Naive thymus-derived CD4-positive, alpha-beta T cell (primary cell): ENCODE measurements at regions of chr11 and their contacts with region 1.

Region 1: GRCh38 chr11:128323381-128323780 is 264.0 kb downstream of the ETS1 start:
- DNase-seq: peak in 7 of 9 donors; percentile 51 to 69 (median 60)
- ATAC-seq: no peak
- H3K4me3 ChIP-seq: peak overlapping the region; percentile 1
- H3K4me3 Mint-ChIP-seq: peak overlapping the region; percentile 21 to 89 (median 68)
- H3K27ac ChIP-seq: peak overlapping the region; percentile 91
- H3K27ac Mint-ChIP-seq: peak overlapping the region; percentile 95 to 99 (median 96)
- H3K4me1 ChIP-seq: peaks cover 80% of the 10 kb centered on the region in 2 donors
- H3K4me1 Mint-ChIP-seq: peaks cover 57 to 97% (median 87%) of the 10 kb centered on the region in 7 donors
- H3K27me3 ChIP-seq: no peaks in the 10 kb centered on the region
- H3K27me3 Mint-ChIP-seq: no peaks in the 10 kb centered on the region

Region 2: GRCh38 chr11:127993788-127994187 is 329.6 kb before region 1 on chr11:
- CTCF ChIA-PET with region 1: no interaction called
- POLR2A ChIA-PET with region 1: no interaction called
- intact Hi-C with region 1: no loop called
- DNase-seq: no peak
- ATAC-seq: no peak
- H3K4me3 ChIP-seq: no peak overlapping the region
- H3K4me3 Mint-ChIP-seq: no peak overlapping the region
- H3K27ac ChIP-seq: no peak overlapping the region
- H3K27ac Mint-ChIP-seq: peak overlapping the region in 1 of 9 donors; percentile 55
- H3K4me1 ChIP-seq: no peaks in the 10 kb centered on the region
- H3K4me1 Mint-ChIP-seq: no peaks in the 10 kb centered on the region
- H3K27me3 ChIP-seq: no peaks in the 10 kb centered on the region
- H3K27me3 Mint-ChIP-seq: peaks cover 11 to 41% (median 27%) of the 10 kb centered on the region in 5 donors

Region 3: GRCh38 chr11:128172046-128172878 is 151.1 kb before region 1 on chr11:
- CTCF ChIA-PET with region 1: no interaction called
- POLR2A ChIA-PET with region 1: no interaction called
- intact Hi-C with region 1: no loop called
- DNase-seq: peak; percentile 59 to 82 (median 75)
- ATAC-seq: peak; percentile 85
- H3K4me3 ChIP-seq: no peak overlapping the region
- H3K4me3 Mint-ChIP-seq: no peak overlapping the region
- H3K27ac ChIP-seq: no peak overlapping the region
- H3K27ac Mint-ChIP-seq: peak overlapping the region in 2 of 9 donors; percentile 27 to 70
- H3K4me1 ChIP-seq: no peaks in the 10 kb centered on the region
- H3K4me1 Mint-ChIP-seq: peaks cover 0 to 9% (median 4%) of the 10 kb centered on the region in 7 donors
- H3K27me3 ChIP-seq: no peaks in the 10 kb centered on the region
- H3K27me3 Mint-ChIP-seq: peaks cover 0 to 15% (median 0%) of the 10 kb centered on the region in 5 donors

Region 4: GRCh38 chr11:128311742-128312719 is 11.3 kb before region 1 on chr11:
- CTCF ChIA-PET with region 1: interaction called, 10 read pairs
- POLR2A ChIA-PET with region 1: interaction called, 131 read pairs
- intact Hi-C with region 1: no loop called
- DNase-seq: peak in 3 of 9 donors; percentile 44 to 53 (median 45)
- ATAC-seq: peak; percentile 85
- H3K4me3 ChIP-seq: no peak overlapping the region
- H3K4me3 Mint-ChIP-seq: peak overlapping the region; percentile 9 to 82 (median 58)
- H3K27ac ChIP-seq: peak overlapping the region; percentile 98
- H3K27ac Mint-ChIP-seq: peak overlapping the region; percentile 65 to 99 (median 97)
- H3K4me1 ChIP-seq: peaks cover 27 to 60% of the 10 kb centered on the region in 2 donors
- H3K4me1 Mint-ChIP-seq: peaks cover 53 to 91% (median 88%) of the 10 kb centered on the region in 7 donors
- H3K27me3 ChIP-seq: no peaks in the 10 kb centered on the region
- H3K27me3 Mint-ChIP-seq: no peaks in the 10 kb centered on the region

Region 5: GRCh38 chr11:128342511-128343134 is 19.2 kb after region 1 on chr11:
- CTCF ChIA-PET with region 1: interaction called, 3 read pairs
- POLR2A ChIA-PET with region 1: interaction called, 11 read pairs
- intact Hi-C with region 1: loop called (anchors 1 kb)
- DNase-seq: peak in 5 of 9 donors; percentile 46 to 77 (median 63)
- ATAC-seq: peak; percentile 54
- H3K4me3 ChIP-seq: peak overlapping the region; percentile 57
- H3K4me3 Mint-ChIP-seq: peak overlapping the region; percentile 74 to 90 (median 84)
- H3K27ac ChIP-seq: peak overlapping the region; percentile 93
- H3K27ac Mint-ChIP-seq: peak overlapping the region; percentile 97 to 99 (median 99)
- H3K4me1 ChIP-seq: peaks cover 50 to 64% of the 10 kb centered on the region in 2 donors
- H3K4me1 Mint-ChIP-seq: peaks cover 52 to 99% (median 94%) of the 10 kb centered on the region in 7 donors
- H3K27me3 ChIP-seq: no peaks in the 10 kb centered on the region
- H3K27me3 Mint-ChIP-seq: no peaks in the 10 kb centered on the region

Region 6: GRCh38 chr11:128463371-128463829 is 140.0 kb after region 1 on chr11:
- CTCF ChIA-PET with region 1: interaction called, 8 read pairs
- POLR2A ChIA-PET with region 1: interaction called, 10 read pairs
- intact Hi-C with region 1: no loop called
- DNase-seq: no peak
- ATAC-seq: no peak
- H3K4me3 ChIP-seq: peak overlapping the region; percentile 37
- H3K4me3 Mint-ChIP-seq: peak overlapping the region; percentile 73 to 99 (median 80)
- H3K27ac ChIP-seq: peak overlapping the region; percentile 97
- H3K27ac Mint-ChIP-seq: peak overlapping the region; percentile 88 to 100 (median 98)
- H3K4me1 ChIP-seq: peaks cover 74 to 86% of the 10 kb centered on the region in 2 donors
- H3K4me1 Mint-ChIP-seq: peaks cover 64 to 100% (median 93%) of the 10 kb centered on the region in 7 donors
- H3K27me3 ChIP-seq: no peaks in the 10 kb centered on the region
- H3K27me3 Mint-ChIP-seq: no peaks in the 10 kb centered on the region

Region 7: GRCh38 chr11:128512474-128512996 is 189.2 kb after region 1 on chr11:
- CTCF ChIA-PET with region 1: interaction called, 18 read pairs
- POLR2A ChIA-PET with region 1: interaction called, 50 read pairs
- intact Hi-C with region 1: no loop called
- DNase-seq: peak in 5 of 9 donors; percentile 26 to 56 (median 47)
- ATAC-seq: peak; percentile 40
- H3K4me3 ChIP-seq: peak overlapping the region; percentile 96
- H3K4me3 Mint-ChIP-seq: peak overlapping the region; percentile 94 to 100 (median 98)
- H3K27ac ChIP-seq: peak overlapping the region; percentile 97
- H3K27ac Mint-ChIP-seq: peak overlapping the region; percentile 92 to 99 (median 97)
- H3K4me1 ChIP-seq: peaks cover 54 to 59% of the 10 kb centered on the region in 2 donors
- H3K4me1 Mint-ChIP-seq: peaks cover 50 to 94% (median 77%) of the 10 kb centered on the region in 7 donors
- H3K27me3 ChIP-seq: no peaks in the 10 kb centered on the region
- H3K27me3 Mint-ChIP-seq: no peaks in the 10 kb centered on the region

Region 8: DNA sequence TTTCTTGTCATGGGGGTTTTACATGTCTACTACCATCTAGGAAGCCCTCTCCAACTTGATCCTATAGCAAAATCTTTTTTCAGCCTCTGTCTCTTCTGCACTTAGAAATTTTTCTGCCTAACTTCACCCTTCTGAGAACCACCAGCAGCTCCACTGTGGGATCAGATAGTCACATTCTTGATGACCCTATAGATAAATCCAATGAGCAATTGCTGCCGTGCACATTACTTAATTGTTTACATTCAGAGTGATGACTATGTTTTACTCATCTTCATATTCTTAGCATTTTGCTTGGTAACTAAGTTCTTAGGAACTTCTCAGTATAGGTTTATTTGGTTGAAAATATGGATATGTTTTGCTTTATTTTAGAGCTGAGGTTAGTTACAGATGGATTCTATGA is 276.3 kb after region 1 on chr11:
- CTCF ChIA-PET with region 1: no interaction called
- POLR2A ChIA-PET with region 1: no interaction called
- intact Hi-C with region 1: no loop called
- DNase-seq: no peak
- ATAC-seq: no peak
- H3K4me3 ChIP-seq: no peak overlapping the region
- H3K4me3 Mint-ChIP-seq: no peak overlapping the region
- H3K27ac ChIP-seq: no peak overlapping the region
- H3K27ac Mint-ChIP-seq: peak overlapping the region in 4 of 9 donors; percentile 21 to 67 (median 40)
- H3K4me1 ChIP-seq: peaks cover 0 to 16% of the 10 kb centered on the region in 2 donors
- H3K4me1 Mint-ChIP-seq: peaks cover 5 to 71% (median 60%) of the 10 kb centered on the region in 7 donors
- H3K27me3 ChIP-seq: no peaks in the 10 kb centered on the region
- H3K27me3 Mint-ChIP-seq: peaks cover 0 to 5% (median 0%) of the 10 kb centered on the region in 5 donors